ENCODE measurements at regions of chr22 and their contacts with region 1.

Region 1: GRCh38 chr22:44033694-44034093 is 9.6 kb downstream of the PARVB start:
- DNase-seq: peak; percentile 46

Region 2: DNA sequence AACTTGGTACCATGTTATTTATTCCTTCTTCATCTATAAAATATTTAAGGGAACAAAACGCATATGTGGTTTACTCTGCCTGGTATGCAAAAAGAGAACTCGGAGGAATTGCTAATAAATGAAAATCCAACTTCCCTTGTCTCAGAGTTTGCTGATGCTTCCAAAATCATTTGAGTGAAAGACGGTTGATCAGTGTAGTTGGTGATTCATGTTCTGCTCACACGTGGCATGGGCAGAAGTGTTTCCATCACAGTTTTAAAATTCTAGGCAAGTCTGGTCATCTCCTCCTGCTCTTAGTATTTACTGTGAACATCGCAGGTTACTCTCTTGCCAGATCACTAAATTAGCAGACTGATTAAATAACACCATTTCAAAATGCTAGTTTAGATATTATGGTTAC is 21.5 kb before region 1 on chr22:
- CTCF ChIA-PET with region 1: no interaction called
- POLR2A ChIA-PET with region 1: no interaction called
- DNase-seq: no peak

Region 3: GRCh38 chr22:44023404-44024287 is 10.0 kb before region 1 on chr22:
- CTCF ChIA-PET with region 1: no interaction called
- POLR2A ChIA-PET with region 1: interaction called, 13 read pairs
- DNase-seq: peak; percentile 56

Measured in HEK293T (cell line).